ENCODE measurements at regions of chr1 and their contacts with region 1.

Region 1: GRCh38 chr1:99696616-99697015 is 50.7 kb downstream of the PALMD start:
- DNase-seq: no peak
- ATAC-seq: no peak
- H3K4me3 Mint-ChIP-seq: no peak overlapping the region
- H3K27ac Mint-ChIP-seq: no peak overlapping the region
- H3K4me1 Mint-ChIP-seq: no peaks in the 10 kb centered on the region
- H3K27me3 Mint-ChIP-seq: peaks cover 44% of the 10 kb centered on the region

Region 2: GRCh38 chr1:99672500-99673213 is 24.0 kb before region 1 on chr1:
- CTCF ChIA-PET with region 1: no interaction called
- POLR2A ChIA-PET with region 1: no interaction called
- DNase-seq: no peak
- ATAC-seq: no peak
- H3K4me3 Mint-ChIP-seq: no peak overlapping the region
- H3K27ac Mint-ChIP-seq: no peak overlapping the region
- H3K4me1 Mint-ChIP-seq: no peaks in the 10 kb centered on the region
- H3K27me3 Mint-ChIP-seq: peaks cover 22% of the 10 kb centered on the region

Region 3: GRCh38 chr1:99685516-99686180 is 11.0 kb before region 1 on chr1:
- CTCF ChIA-PET with region 1: interaction called, 13 read pairs
- POLR2A ChIA-PET with region 1: no interaction called
- DNase-seq: peak; percentile 60
- ATAC-seq: peak; percentile 67
- H3K4me3 Mint-ChIP-seq: no peak overlapping the region
- H3K27ac Mint-ChIP-seq: no peak overlapping the region
- H3K4me1 Mint-ChIP-seq: no peaks in the 10 kb centered on the region
- H3K27me3 Mint-ChIP-seq: peaks cover 20% of the 10 kb centered on the region